ENCODE measurements at regions of chr6 and their contacts with region 1.

Region 1: GRCh38 chr6:132830334-132830751 is 16.0 kb downstream of the RPS12 start:
- DNase-seq: peak in 1 of 2 experiments; percentile 35
- ATAC-seq: peak in 1 of 2 experiments; percentile 70; a peak in 2 of 6 replicates
- H3K4me3 ChIP-seq: no peak overlapping the region
- H3K27ac ChIP-seq: no peak overlapping the region
- H3K4me1 ChIP-seq: no peaks in the 10 kb centered on the region
- CTCF ChIP-seq: peak; percentile 65
- EP300 ChIP-seq: no peak
- POLR2A ChIP-seq: no peak
- RAD21 ChIP-seq: peak; percentile 79 to 80

Region 2: DNA sequence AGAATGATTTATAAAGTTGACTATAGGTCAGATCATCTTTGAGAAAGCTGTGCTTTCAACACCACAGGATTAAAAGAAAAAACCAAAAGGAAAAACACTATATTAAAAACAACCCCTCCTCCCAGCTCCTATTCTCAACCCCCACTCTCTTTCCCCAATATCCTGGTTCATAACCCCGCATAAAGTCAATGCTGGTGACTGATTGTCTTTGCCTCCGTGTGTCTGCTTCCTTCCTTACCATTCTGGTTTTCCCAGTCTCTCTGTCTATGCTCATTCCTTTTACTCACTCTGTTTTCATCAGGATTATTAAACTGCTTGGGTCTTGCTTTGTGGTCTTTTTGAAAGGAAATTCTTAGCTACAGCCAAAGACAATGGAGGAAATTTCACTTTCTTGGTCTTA is 20.0 kb after region 1 on chr6:
- CTCF ChIA-PET with region 1: no interaction called
- POLR2A ChIA-PET with region 1: no interaction called
- DNase-seq: no peak
- ATAC-seq: no peak
- H3K4me3 ChIP-seq: no peak overlapping the region
- H3K27ac ChIP-seq: no peak overlapping the region
- H3K4me1 ChIP-seq: no peaks in the 10 kb centered on the region
- CTCF ChIP-seq: no peak
- EP300 ChIP-seq: no peak
- POLR2A ChIP-seq: no peak
- RAD21 ChIP-seq: no peak

Region 3: GRCh38 chr6:133551847-133552341 is 721.6 kb after region 1 on chr6:
- CTCF ChIA-PET with region 1: interaction called, 26 read pairs
- POLR2A ChIA-PET with region 1: no interaction called
- DNase-seq: peak; percentile 16 to 74
- ATAC-seq: peak; percentile 84 to 86
- H3K4me3 ChIP-seq: no peak overlapping the region
- H3K27ac ChIP-seq: peak overlapping the region; percentile 70 to 75
- H3K4me1 ChIP-seq: peaks cover 53% of the 10 kb centered on the region
- CTCF ChIP-seq: no peak
- EP300 ChIP-seq: peak in 1 of 2 experiments; percentile 58; a peak in 2 of 5 replicates
- POLR2A ChIP-seq: no peak
- RAD21 ChIP-seq: no peak